HCT116 (cell line): ENCODE measurements at regions of chr3 and their contacts with region 1.

Region 1: GRCh38 chr3:122858373-122858772 is 63.5 kb downstream of the SLC49A4 start:
- DNase-seq: peak; percentile 15
- ATAC-seq: no peak
- H3K4me3 ChIP-seq: no peak overlapping the region
- H3K27ac ChIP-seq: no peak overlapping the region
- H3K4me1 ChIP-seq: no peaks in the 10 kb centered on the region
- H3K27me3 ChIP-seq: no peaks in the 10 kb centered on the region
- CTCF ChIP-seq: peak; percentile 26 to 50 (median 50); a peak in 4 of 6 replicates
- POLR2A ChIP-seq: no peak
- RAD21 ChIP-seq: peak; percentile 65

Region 2: DNA sequence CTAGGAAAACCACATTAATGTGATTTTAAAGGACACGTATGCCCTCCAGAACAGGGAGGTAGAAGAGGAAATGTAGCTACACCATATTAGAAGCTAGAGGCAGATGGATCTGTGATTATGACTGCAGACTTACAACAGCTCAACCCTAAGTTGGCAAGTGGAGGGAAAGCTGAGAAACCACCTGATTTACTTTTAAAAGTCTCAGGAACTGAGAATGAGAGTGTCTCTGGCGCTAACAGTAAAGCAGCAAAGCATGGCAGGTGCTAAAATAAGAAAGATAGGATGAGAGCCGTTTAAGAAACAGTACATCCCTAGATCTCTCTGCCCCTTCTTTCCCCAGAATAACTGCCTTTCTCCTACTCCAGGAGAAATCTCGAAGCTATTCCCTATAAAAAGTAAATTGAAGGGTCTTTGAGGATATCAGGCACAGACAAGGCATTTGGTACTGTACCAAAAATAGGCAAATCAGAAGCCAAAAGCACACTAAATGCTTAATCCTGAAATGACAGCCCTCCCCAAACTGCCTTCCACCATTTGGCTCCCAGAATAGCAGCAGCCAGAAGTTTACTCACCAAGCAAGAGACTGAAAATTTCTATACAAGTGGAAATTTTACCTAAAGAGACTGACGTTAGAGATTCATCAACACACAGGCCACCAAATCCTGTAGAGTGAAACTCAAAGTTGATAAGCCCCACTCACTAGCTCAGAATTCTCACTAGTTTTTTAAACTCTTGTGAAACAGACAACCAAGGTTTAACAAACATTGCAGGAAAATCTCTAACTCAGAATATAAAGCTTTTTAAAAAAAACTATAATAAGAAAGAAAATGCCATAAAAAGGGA is 212.0 kb before region 1 on chr3:
- CTCF ChIA-PET with region 1: no interaction called
- POLR2A ChIA-PET with region 1: no interaction called
- RAD21 ChIA-PET with region 1: no interaction called
- intact Hi-C with region 1: no loop called
- DNase-seq: no peak
- ATAC-seq: no peak
- H3K4me3 ChIP-seq: no peak overlapping the region
- H3K27ac ChIP-seq: no peak overlapping the region
- H3K4me1 ChIP-seq: no peaks in the 10 kb centered on the region
- H3K27me3 ChIP-seq: no peaks in the 10 kb centered on the region
- CTCF ChIP-seq: no peak
- POLR2A ChIP-seq: no peak
- RAD21 ChIP-seq: no peak

Region 3: DNA sequence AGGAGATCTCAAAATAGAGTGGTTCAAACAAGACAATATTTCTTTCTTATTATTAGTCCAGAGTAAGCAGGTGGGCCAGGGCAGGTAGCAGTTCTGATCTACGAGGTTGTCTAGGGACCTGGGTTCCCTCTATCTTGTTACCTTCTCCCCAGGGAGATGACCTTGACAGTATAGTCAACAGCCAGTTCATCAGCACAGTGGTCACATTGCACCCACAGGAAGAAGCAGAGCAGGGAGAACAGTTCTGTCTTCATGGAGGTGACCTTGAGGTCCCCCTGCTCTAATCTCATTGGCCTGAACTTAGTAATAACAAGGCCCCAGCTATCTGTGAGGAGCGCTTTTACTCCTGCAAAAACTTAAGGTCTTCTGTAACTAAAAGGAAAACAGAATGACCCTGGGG is 41.8 kb before region 1 on chr3:
- CTCF ChIA-PET with region 1: no interaction called
- POLR2A ChIA-PET with region 1: no interaction called
- RAD21 ChIA-PET with region 1: no interaction called
- intact Hi-C with region 1: no loop called
- DNase-seq: no peak
- ATAC-seq: no peak
- H3K4me3 ChIP-seq: no peak overlapping the region
- H3K27ac ChIP-seq: no peak overlapping the region
- H3K4me1 ChIP-seq: no peaks in the 10 kb centered on the region
- H3K27me3 ChIP-seq: no peaks in the 10 kb centered on the region
- CTCF ChIP-seq: no peak
- POLR2A ChIP-seq: no peak
- RAD21 ChIP-seq: no peak

Region 4: DNA sequence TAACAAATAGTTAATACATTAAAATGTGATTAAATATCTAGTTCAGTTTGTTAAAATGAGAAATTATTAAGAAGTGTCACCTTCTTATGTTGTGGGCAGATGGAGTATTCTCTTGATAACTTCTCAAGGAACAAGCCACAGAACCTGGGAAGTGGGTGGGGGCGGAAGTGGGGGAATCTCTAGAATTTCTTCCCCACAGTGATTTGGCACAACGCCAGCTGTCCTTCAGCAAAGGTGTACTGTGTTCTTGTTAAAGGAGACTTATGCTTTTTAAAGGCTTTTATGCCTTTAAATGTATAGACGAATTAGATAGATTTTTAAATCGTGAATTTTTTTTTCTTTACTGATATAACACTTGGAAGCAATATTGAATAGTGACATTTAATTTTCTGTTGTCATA is 385.8 kb after region 1 on chr3:
- CTCF ChIA-PET with region 1: no interaction called
- POLR2A ChIA-PET with region 1: no interaction called
- RAD21 ChIA-PET with region 1: no interaction called
- intact Hi-C with region 1: loop called (anchors 10 kb)
- DNase-seq: no peak
- ATAC-seq: no peak
- H3K4me3 ChIP-seq: no peak overlapping the region
- H3K27ac ChIP-seq: no peak overlapping the region
- H3K4me1 ChIP-seq: no peaks in the 10 kb centered on the region
- H3K27me3 ChIP-seq: no peaks in the 10 kb centered on the region
- CTCF ChIP-seq: no peak
- POLR2A ChIP-seq: no peak
- RAD21 ChIP-seq: no peak